ENCODE measurements at regions of chr22 and their contacts with region 1.

Region 1: GRCh38 chr22:40177738-40178416 is at the start of gene TNRC6B:
- DNase-seq: peak; percentile 36 to 97 (median 58)
- ATAC-seq: peak; percentile 80
- H3K4me3 ChIP-seq: peak within 1 kb of the TSS; percentile 74
- H3K4me3 Mint-ChIP-seq: peak within 1 kb of the TSS; percentile 90
- H3K27ac ChIP-seq: peak within 1 kb of the TSS; percentile 49 to 84
- H3K27ac Mint-ChIP-seq: peak within 1 kb of the TSS; percentile 90
- H3K4me1 ChIP-seq: peaks cover 47% of the 10 kb centered on the region
- H3K4me1 Mint-ChIP-seq: peaks cover 72% of the 10 kb centered on the region
- H3K27me3 ChIP-seq: no peaks in the 10 kb centered on the region
- H3K27me3 Mint-ChIP-seq: no peaks in the 10 kb centered on the region
- CTCF ChIP-seq: no peak
- total RNA-seq, gene TNRC6B: 110 to 111 TPM

Region 2: DNA sequence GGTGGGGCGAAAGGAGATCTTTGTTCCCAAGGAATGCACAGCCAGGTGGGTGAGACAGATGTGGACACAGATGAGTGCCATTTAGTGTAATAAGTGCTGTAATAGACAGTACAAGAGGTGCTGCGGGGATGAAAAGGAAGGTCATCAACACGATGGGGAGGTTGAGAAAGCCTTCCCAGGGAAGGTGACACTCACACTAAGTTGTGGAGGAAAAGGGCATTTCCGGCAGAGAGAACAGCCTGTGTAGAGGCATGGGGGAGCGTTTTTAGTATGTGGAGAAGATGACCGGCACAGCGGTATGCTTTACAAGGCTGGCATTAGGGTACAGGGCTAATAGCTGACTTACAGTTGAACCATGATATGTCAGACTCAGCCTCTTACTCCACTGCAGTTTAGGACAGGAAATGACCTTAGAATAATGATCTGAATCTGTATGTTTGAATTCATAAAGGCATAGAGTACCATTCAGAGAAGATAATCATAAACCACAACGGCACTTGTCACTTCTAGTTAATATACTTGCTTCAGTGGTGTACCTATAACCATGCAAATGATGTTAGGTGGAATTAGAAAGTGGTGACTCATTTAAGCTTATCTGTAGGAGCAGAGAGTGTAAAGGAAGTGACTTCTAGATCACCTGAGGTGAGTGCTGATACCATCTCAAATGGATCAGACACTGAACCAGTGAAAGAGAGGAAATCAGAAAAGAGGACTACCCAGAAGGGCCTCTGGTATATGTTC is 122.6 kb before region 1 on chr22:
- CTCF ChIA-PET with region 1: no interaction called
- POLR2A ChIA-PET with region 1: interaction called, 3 read pairs
- intact Hi-C with region 1: loop called in 1 of 2 experiments (anchors 5 kb)
- DNase-seq: peak in 4 of 14 experiments; percentile 23 to 80 (median 74)
- ATAC-seq: peak; percentile 95
- H3K4me3 ChIP-seq: peak overlapping the region; percentile 17
- H3K4me3 Mint-ChIP-seq: peak overlapping the region; percentile 57
- H3K27ac ChIP-seq: peak overlapping the region; percentile 72 to 86
- H3K27ac Mint-ChIP-seq: peak overlapping the region; percentile 82
- H3K4me1 ChIP-seq: peaks cover 71% of the 10 kb centered on the region
- H3K4me1 Mint-ChIP-seq: peaks cover 82% of the 10 kb centered on the region
- H3K27me3 ChIP-seq: no peaks in the 10 kb centered on the region
- H3K27me3 Mint-ChIP-seq: no peaks in the 10 kb centered on the region
- CTCF ChIP-seq: no peak

Region 3: GRCh38 chr22:40193429-40194421 is 15.8 kb after region 1 on chr22:
- CTCF ChIA-PET with region 1: interaction called, 12 read pairs
- POLR2A ChIA-PET with region 1: interaction called, 8 read pairs
- intact Hi-C with region 1: no loop called
- DNase-seq: peak in 3 of 14 experiments; percentile 31 to 45 (median 40)
- ATAC-seq: peak; percentile 61
- H3K4me3 ChIP-seq: no peak overlapping the region
- H3K4me3 Mint-ChIP-seq: peak overlapping the region; percentile 7
- H3K27ac ChIP-seq: no peak overlapping the region
- H3K27ac Mint-ChIP-seq: peak overlapping the region; percentile 75
- H3K4me1 ChIP-seq: peaks cover 70% of the 10 kb centered on the region
- H3K4me1 Mint-ChIP-seq: peaks cover 83% of the 10 kb centered on the region
- H3K27me3 ChIP-seq: no peaks in the 10 kb centered on the region
- H3K27me3 Mint-ChIP-seq: no peaks in the 10 kb centered on the region
- CTCF ChIP-seq: no peak

Region 4: DNA sequence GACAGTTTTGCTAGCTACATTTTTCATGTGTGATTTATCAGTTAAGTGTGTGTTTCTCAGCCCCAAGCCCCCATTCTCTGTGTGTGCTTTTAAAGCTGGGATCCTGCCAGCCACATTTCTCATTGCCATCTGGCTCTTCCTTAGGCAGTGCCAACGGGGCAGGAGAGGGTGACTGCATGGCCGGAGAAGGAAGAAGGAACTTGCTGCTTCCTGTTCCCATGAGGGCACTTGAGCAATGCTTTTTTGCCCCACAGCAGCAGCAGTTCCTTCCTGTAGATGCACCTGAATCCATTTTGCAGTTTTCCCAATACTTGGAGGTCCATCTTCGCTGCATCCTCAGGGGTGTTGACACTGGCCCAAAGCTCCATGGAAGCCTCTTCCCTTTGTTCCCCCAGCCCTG is 37.4 kb after region 1 on chr22:
- CTCF ChIA-PET with region 1: no interaction called
- POLR2A ChIA-PET with region 1: interaction called, 5 read pairs
- intact Hi-C with region 1: loop called in 1 of 2 experiments (anchors 5 kb)
- DNase-seq: peak in 3 of 14 experiments; percentile 36 to 50 (median 49)
- ATAC-seq: no peak
- H3K4me3 ChIP-seq: no peak overlapping the region
- H3K4me3 Mint-ChIP-seq: peak overlapping the region; percentile 71
- H3K27ac ChIP-seq: peak overlapping the region; percentile 50 to 59
- H3K27ac Mint-ChIP-seq: peak overlapping the region; percentile 91
- H3K4me1 ChIP-seq: peaks cover 88% of the 10 kb centered on the region
- H3K4me1 Mint-ChIP-seq: peaks cover 90% of the 10 kb centered on the region
- H3K27me3 ChIP-seq: no peaks in the 10 kb centered on the region
- H3K27me3 Mint-ChIP-seq: no peaks in the 10 kb centered on the region
- CTCF ChIP-seq: no peak

Region 5: GRCh38 chr22:40243891-40244290 is 66.0 kb after region 1 on chr22:
- CTCF ChIA-PET with region 1: interaction called, 5 read pairs
- POLR2A ChIA-PET with region 1: interaction called, 6 read pairs
- intact Hi-C with region 1: loop called (anchors 2 to 5 kb)
- DNase-seq: peak in 4 of 14 experiments; percentile 20 to 71 (median 57)
- ATAC-seq: no peak
- H3K4me3 ChIP-seq: peak overlapping the region; percentile 9
- H3K4me3 Mint-ChIP-seq: peak overlapping the region; percentile 80
- H3K27ac ChIP-seq: peak overlapping the region in 1 of 2 donors; percentile 18
- H3K27ac Mint-ChIP-seq: peak overlapping the region; percentile 86
- H3K4me1 ChIP-seq: peaks cover 82% of the 10 kb centered on the region
- H3K4me1 Mint-ChIP-seq: peaks cover 93% of the 10 kb centered on the region
- H3K27me3 ChIP-seq: no peaks in the 10 kb centered on the region
- H3K27me3 Mint-ChIP-seq: no peaks in the 10 kb centered on the region
- CTCF ChIP-seq: no peak

Region 6: DNA sequence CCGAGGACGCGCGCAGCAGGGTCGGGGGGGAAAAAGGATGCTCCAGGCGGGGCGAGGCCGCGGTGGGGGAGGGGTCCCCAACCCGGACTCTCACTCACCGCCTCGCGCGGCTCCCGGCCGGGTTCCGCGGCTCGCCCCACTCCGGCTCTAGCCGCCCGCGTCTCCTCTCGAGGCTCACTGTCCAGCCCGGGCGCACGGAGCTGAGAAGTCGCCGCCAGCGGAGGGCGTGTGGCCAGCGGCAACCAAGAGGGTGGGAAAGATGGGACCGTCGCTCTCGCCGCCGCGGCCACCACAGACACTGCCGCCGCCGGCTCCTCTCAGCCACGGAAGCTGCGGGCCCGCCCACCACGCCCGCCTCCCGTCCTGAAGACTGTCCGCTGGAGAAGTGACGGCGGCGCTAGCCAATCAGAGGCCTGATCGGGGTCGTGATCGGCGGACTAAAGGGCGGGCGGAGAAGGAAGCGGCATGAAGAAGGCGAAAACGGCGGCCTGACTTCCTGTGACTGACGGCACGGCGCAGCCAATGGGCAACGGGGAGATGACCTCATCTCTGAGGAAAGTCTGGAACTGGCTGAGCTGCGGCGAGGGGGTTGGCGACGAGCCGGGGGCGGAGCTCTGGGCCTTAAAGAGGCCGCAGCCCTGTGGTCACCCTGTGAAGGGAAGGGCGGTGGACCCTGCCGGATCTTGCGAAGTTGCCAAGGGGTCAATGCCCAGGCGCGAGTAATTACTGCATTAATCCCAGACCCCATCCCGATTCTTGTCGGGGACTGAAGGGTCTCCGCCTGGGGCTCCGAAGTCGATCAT is 458.7 kb after region 1 on chr22 and contains the start of gene MRTFA:
- CTCF ChIA-PET with region 1: no interaction called
- POLR2A ChIA-PET with region 1: interaction called, 4 read pairs
- intact Hi-C with region 1: loop called (anchors 1 to 5 kb)
- DNase-seq: peak; percentile 97 to 100 (median 99)
- ATAC-seq: peak; percentile 93
- H3K4me3 ChIP-seq: peak within 1 kb of the TSS; percentile 96
- H3K4me3 Mint-ChIP-seq: peak within 1 kb of the TSS; percentile 100
- H3K27ac ChIP-seq: peak within 1 kb of the TSS; percentile 88 to 93
- H3K27ac Mint-ChIP-seq: peak within 1 kb of the TSS; percentile 99
- H3K4me1 ChIP-seq: peaks cover 38% of the 10 kb centered on the region
- H3K4me1 Mint-ChIP-seq: peaks cover 48% of the 10 kb centered on the region
- H3K27me3 ChIP-seq: no peaks in the 10 kb centered on the region
- H3K27me3 Mint-ChIP-seq: no peaks in the 10 kb centered on the region
- CTCF ChIP-seq: no peak
- total RNA-seq, gene MRTFA: 55.3 to 58.9 TPM

Measured in CD4-positive, alpha-beta T cell (primary cell).